ENCODE measurements at regions of chr2 and their contacts with region 1.

Region 1: DNA sequence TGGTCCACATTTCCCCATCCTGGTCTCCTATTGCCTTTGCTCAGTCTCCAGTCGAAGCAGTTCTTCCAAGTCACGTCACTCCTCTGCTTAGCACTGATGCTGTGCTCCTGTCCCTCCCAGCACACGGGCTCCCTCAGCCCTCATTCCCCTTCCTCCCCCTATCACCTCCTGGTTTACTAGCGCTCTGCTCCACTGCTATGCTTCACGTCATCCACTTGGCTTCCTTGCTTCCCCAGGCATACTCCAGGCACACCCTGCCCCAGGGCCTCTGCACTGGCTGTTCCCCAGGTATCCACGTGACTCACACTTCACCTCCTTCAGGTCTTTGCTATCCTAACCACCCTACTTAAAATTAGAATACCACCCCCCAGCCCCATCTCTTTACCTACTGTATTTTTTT is 269.3 kb downstream of the GLI2 start:
- DNase-seq: no peak
- H3K4me3 ChIP-seq: no peak overlapping the region
- H3K27ac ChIP-seq: no peak overlapping the region
- H3K4me1 ChIP-seq: peaks cover 5% of the 10 kb centered on the region; the same call in 1 of the 2 replicates
- H3K27me3 ChIP-seq: no peaks in the 10 kb centered on the region; the same call in 1 of the 2 replicates
- CTCF ChIP-seq: no peak

Region 2: DNA sequence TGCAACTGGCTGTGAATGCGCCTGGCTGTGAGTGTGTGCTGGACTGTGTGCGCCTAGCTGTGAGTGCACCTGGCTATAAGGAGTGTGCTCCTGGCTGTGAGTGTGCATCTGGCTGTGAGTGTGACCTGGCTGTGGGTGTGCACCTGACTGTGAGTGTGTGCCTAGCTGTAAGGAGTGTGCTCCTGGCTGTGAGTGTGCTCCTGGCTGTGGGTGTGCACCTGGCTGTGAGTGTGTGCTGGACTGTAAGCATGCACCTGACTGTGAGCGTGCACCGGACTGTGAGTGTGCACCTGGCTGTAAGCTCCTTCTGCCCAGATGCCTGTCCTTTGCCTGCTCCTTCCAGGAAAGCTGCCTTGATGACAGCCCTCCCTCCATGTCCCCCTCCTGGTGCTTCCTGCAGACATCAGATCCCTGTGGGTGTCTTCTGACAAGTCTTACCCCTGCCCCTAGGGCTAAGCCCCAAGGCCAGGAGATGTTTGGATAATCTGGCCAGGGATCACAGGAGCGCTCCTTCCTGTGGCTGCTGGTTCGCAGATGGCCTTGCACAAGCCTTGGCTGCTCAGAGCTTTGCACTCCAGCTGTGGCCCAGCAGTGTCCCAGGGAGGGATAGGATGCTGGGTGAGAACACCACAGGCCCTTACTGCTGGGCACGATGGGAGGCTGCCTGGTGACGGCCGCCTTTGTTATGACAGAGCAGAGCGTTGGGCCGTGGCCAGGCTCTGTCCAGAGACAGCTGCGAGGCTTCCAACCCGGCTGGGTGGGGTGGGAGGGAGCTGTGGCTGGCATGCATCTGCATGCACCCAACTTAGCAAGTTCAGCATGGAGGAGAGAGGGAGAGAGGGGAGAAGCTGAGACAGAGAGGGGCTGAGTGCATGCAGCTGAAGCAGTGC is 179.3 kb before region 1 on chr2:
- CTCF ChIA-PET with region 1: no interaction called
- POLR2A ChIA-PET with region 1: interaction called, 21 read pairs
- intact Hi-C with region 1: no loop called
- DNase-seq: no peak
- H3K4me3 ChIP-seq: no peak overlapping the region
- H3K27ac ChIP-seq: no peak overlapping the region
- H3K4me1 ChIP-seq: no peaks in the 10 kb centered on the region
- H3K27me3 ChIP-seq: peaks cover 46% of the 10 kb centered on the region
- CTCF ChIP-seq: no peak

Region 3: GRCh38 chr2:120920454-120921148 is 84.3 kb before region 1 on chr2:
- CTCF ChIA-PET with region 1: no interaction called
- POLR2A ChIA-PET with region 1: no interaction called
- intact Hi-C with region 1: no loop called
- DNase-seq: no peak
- H3K4me3 ChIP-seq: no peak overlapping the region
- H3K27ac ChIP-seq: no peak overlapping the region
- H3K4me1 ChIP-seq: 0 out of 2 replicates have a peak, but pooled peaks cover 2% of the 10 kb centered on the region
- H3K27me3 ChIP-seq: no peaks in the 10 kb centered on the region
- CTCF ChIP-seq: no peak

Region 4: GRCh38 chr2:120934574-120935340 is 70.2 kb before region 1 on chr2:
- CTCF ChIA-PET with region 1: no interaction called
- POLR2A ChIA-PET with region 1: no interaction called
- intact Hi-C with region 1: no loop called
- DNase-seq: peak; percentile 74 to 82
- H3K4me3 ChIP-seq: no peak overlapping the region
- H3K27ac ChIP-seq: no peak overlapping the region
- H3K4me1 ChIP-seq: peaks cover 25% of the 10 kb centered on the region
- H3K27me3 ChIP-seq: no peaks in the 10 kb centered on the region
- CTCF ChIP-seq: no peak